H1 (cell line): ENCODE measurements at regions of chr13 and their contacts with region 1.

Region 1: DNA sequence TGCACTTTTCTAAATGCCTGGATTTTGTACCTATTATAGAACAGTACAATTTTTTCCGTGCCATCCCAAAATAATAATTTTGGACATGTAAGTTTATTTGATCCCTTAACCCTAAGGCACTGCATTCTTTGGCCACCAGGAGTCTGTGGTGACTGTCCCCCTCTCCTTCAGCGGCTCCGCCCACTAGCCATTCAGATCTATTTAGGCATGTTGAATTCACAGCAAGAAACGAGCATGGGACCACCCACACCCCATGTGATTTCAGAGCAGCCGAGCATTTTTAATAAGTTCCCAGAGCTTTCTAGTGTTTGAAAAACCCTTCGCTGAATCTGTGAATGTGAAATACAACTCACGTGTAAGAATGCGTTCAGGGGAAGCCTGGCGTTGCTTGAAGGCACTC is 567.5 kb downstream of the MYO16 start:
- DNase-seq: peak in 1 of 2 experiments; percentile 55
- H3K4me3 ChIP-seq: no peak overlapping the region
- H3K27ac ChIP-seq: no peak overlapping the region
- H3K4me1 ChIP-seq: peaks cover 0 to 8% (median 1%) of the 10 kb centered on the region in 4 experiments; a peak in 2 of 7 replicates
- H3K27me3 ChIP-seq: peaks cover 0 to 1% (median 0%) of the 10 kb centered on the region in 4 experiments; a peak in 1 of 7 replicates
- CTCF ChIP-seq: peak; percentile 32 to 59 (median 57)
- EP300 ChIP-seq: no peak
- POLR2A ChIP-seq: no peak
- RAD21 ChIP-seq: peak; percentile 45 to 48

Region 2: DNA sequence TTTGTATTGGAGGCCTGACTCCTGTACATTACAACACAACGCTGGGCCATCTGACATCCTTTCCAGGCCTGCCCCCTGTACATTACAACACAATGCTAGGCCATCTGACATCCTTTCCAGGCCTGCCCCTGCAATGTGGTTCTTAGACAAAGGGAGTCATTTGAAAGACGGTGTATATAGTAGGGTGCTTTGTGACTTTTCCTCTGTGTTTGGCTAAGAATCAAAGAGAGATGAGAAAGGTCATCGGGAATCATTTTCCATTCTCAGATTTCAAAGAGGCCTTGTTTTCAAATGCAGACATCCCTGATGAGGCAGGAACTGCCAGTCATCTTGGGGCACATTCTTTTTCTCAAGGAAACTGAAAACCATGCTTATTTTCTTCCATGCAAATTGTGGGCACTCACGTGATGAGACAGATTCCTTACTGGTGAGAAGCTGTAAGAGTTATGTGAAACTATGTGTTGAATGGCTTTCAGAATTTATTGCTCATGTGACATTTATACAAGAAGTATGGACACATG is 16.0 kb before region 1 on chr13:
- CTCF ChIA-PET with region 1: interaction called, 11 read pairs
- POLR2A ChIA-PET with region 1: no interaction called
- DNase-seq: no peak
- H3K4me3 ChIP-seq: no peak overlapping the region
- H3K27ac ChIP-seq: no peak overlapping the region
- H3K4me1 ChIP-seq: peaks cover 0 to 6% (median 3%) of the 10 kb centered on the region in 4 experiments; a peak in 2 of 7 replicates
- H3K27me3 ChIP-seq: no peaks in the 10 kb centered on the region
- CTCF ChIP-seq: no peak
- EP300 ChIP-seq: no peak
- POLR2A ChIP-seq: no peak
- RAD21 ChIP-seq: no peak